Caco-2 (cell line): ENCODE measurements at regions of chr1 and their contacts with region 1.

Region 1: DNA sequence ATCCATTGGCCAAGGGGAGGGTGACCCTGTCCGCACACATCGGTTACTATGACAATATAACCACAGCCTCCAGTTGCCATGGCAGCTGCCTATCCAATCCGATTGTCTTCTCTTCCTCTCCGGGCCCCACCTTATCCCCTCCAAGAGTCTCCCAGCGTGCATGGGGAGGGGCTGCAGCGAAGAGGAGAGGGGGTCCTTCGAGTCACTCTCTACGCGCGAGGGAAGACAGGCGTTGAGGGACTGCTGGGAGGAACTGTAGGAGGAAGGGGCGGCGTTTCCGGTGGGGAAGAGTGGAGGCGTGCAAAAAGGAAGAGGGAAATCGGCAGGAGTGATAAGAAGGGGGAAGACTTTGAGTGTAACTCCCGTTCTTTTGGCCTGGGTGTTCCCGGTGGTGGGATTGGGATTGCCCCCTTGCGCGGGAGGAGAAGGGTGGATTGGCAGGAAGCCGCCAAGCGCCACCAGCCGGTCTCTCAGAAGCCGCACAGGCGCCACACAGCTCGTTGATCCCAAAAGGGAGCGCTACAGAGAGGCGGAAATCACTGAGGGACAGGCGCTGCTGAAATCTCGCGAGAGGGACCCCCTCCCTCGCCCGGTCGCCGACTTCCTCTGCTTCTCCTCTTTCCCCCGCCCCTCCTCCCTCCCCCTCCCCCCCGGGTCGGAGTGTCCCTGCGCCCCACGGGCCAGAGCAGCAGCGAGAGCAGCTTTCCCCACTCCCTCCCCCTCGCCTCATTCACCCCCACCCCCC is 384 bp upstream of the SMG7 start:
- DNase-seq: peak; percentile 96 to 99
- H3K4me3 ChIP-seq: peak overlapping the region; percentile 87
- H3K4me3 Mint-ChIP-seq: peak overlapping the region; percentile 97
- H3K27ac Mint-ChIP-seq: peak overlapping the region; percentile 100
- H3K4me1 ChIP-seq: peaks cover 17% of the 10 kb centered on the region; the same call in 1 of the 2 replicates
- H3K4me1 Mint-ChIP-seq: peaks cover 13% of the 10 kb centered on the region
- H3K27me3 ChIP-seq: no peaks in the 10 kb centered on the region
- H3K27me3 Mint-ChIP-seq: no peaks in the 10 kb centered on the region
- CTCF ChIP-seq: peak in 1 of 2 experiments; percentile 20

Region 2: GRCh38 chr1:182968151-182968765 is 503.7 kb before region 1 on chr1:
- CTCF ChIA-PET with region 1: no interaction called
- POLR2A ChIA-PET with region 1: no interaction called
- intact Hi-C with region 1: loop called (anchors 5 kb)
- DNase-seq: peak; percentile 41 to 53
- H3K4me3 ChIP-seq: no peak overlapping the region
- H3K4me3 Mint-ChIP-seq: peak overlapping the region; percentile 52
- H3K27ac Mint-ChIP-seq: peak overlapping the region; percentile 92
- H3K4me1 ChIP-seq: peaks cover 84% of the 10 kb centered on the region
- H3K4me1 Mint-ChIP-seq: peaks cover 21% of the 10 kb centered on the region
- H3K27me3 ChIP-seq: no peaks in the 10 kb centered on the region
- H3K27me3 Mint-ChIP-seq: no peaks in the 10 kb centered on the region
- CTCF ChIP-seq: no peak

Region 3: GRCh38 chr1:183374833-183375232 is 97.1 kb before region 1 on chr1:
- CTCF ChIA-PET with region 1: no interaction called
- POLR2A ChIA-PET with region 1: no interaction called
- intact Hi-C with region 1: loop called (anchors 2 kb)
- DNase-seq: peak; percentile 44 to 55
- H3K4me3 ChIP-seq: no peak overlapping the region
- H3K4me3 Mint-ChIP-seq: no peak overlapping the region
- H3K27ac Mint-ChIP-seq: no peak overlapping the region
- H3K4me1 ChIP-seq: peaks cover 16% of the 10 kb centered on the region
- H3K4me1 Mint-ChIP-seq: peaks cover 21% of the 10 kb centered on the region
- H3K27me3 ChIP-seq: no peaks in the 10 kb centered on the region
- H3K27me3 Mint-ChIP-seq: no peaks in the 10 kb centered on the region
- CTCF ChIP-seq: no peak

Region 4: GRCh38 chr1:183515018-183515689 is 43.2 kb after region 1 on chr1:
- CTCF ChIA-PET with region 1: no interaction called
- POLR2A ChIA-PET with region 1: interaction called, 15 read pairs
- intact Hi-C with region 1: loop called (anchors 5 kb)
- DNase-seq: no peak
- H3K4me3 ChIP-seq: no peak overlapping the region
- H3K4me3 Mint-ChIP-seq: no peak overlapping the region
- H3K27ac Mint-ChIP-seq: no peak overlapping the region
- H3K4me1 ChIP-seq: peaks cover 20% of the 10 kb centered on the region
- H3K4me1 Mint-ChIP-seq: peaks cover 25% of the 10 kb centered on the region
- H3K27me3 ChIP-seq: no peaks in the 10 kb centered on the region
- H3K27me3 Mint-ChIP-seq: no peaks in the 10 kb centered on the region
- CTCF ChIP-seq: no peak

Region 5: DNA sequence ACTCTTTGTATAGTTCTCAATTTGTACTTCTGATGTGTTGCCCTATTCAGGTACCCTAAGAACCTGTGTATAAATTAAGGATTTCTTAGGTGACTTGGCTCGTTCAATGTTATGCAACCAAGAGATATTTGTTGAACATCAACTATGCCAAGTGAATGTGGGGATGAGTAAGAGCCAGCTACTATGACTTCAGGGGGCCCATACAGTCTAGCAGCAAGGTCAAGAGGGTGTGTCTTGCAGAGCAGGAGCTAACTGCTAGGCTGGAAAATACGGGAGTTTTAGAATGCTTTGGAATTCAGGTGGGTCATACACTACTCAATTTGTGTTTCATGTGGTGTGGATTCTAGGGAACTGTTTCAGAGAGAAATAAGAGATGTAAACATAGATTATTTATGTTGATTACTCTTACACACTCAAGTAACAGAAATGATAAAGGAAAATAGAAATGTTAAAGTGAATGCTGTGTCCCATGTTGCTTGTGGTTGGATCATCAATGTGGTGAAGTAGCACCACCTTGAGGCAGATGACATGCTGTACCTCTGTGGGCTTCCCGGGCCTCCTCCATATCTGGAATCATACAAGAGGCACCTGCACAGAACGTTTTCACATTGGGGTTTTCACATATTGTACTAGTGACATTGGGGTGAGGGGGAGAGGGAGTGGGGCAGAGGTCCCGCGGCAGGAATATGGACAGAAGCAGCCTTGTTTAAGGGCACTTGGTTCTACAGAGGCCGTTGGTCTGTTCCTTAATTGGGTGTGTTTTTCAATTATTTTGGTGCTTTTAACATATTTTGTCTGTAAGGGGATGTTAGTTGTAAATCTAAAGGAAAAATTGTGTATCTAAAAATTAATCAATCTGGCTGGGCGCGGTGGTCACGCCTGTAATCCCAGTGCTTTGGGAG is 151.2 kb after region 1 on chr1:
- CTCF ChIA-PET with region 1: no interaction called
- POLR2A ChIA-PET with region 1: no interaction called
- intact Hi-C with region 1: loop called (anchors 1 kb)
- DNase-seq: peak; percentile 65 to 70
- H3K4me3 ChIP-seq: no peak overlapping the region
- H3K4me3 Mint-ChIP-seq: no peak overlapping the region
- H3K27ac Mint-ChIP-seq: no peak overlapping the region
- H3K4me1 ChIP-seq: peaks cover 19% of the 10 kb centered on the region
- H3K4me1 Mint-ChIP-seq: peaks cover 9% of the 10 kb centered on the region
- H3K27me3 ChIP-seq: no peaks in the 10 kb centered on the region
- H3K27me3 Mint-ChIP-seq: no peaks in the 10 kb centered on the region
- CTCF ChIP-seq: peak; percentile 71 to 78